Activated CD8-positive, alpha-beta T cell treated with anti-CD3 and anti-CD28 coated beads for 36 hours (primary cell): ENCODE measurements at regions of chr5 and their contacts with region 1.

Region 1: GRCh38 chr5:168579488-168580226 is 489 bp upstream of the PANK3 start:
- DNase-seq: peak; percentile 99
- ATAC-seq: peak; percentile 97
- H3K4me3 Mint-ChIP-seq: peak overlapping the region; percentile 98
- H3K27ac Mint-ChIP-seq: peak overlapping the region; percentile 98
- H3K4me1 Mint-ChIP-seq: peaks cover 33% of the 10 kb centered on the region
- H3K27me3 Mint-ChIP-seq: peaks cover 4% of the 10 kb centered on the region
- CTCF ChIP-seq: no peak

Region 2: DNA sequence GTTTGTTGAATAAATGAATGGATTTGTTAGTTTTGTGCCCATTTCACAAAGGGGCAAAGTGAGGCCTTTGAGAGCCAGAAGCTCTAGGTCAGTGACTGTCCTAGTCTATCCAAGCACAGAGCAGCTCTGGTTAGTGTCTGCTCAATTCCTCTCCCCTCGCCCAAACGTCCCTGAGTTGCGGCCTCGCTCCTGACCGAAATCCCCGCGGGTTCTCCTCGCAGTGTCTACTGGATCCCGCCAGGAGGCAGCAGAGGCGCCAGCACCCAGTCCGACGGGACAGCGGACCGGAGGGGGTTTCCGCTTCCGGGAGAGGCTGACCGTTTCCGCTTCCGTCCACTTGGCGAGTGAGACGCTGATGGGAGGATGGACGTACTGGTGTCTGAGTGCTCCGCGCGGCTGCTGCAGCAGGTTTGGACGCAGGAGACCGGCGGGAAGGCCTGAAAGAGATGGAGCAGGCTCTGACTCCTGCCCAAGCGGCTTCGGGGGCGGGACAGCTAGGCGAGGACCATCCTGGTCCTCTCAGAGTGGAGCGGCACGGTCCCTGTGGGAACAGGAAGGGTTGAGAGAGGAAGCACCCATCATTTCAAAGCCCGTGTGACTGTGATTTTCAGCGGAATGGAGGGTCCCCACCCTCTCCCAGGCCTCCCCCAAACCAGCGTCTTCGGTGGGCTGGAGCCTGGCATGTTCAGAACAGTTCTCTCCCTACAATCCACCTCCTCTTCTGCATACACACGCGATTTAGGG is 93.3 kb before region 1 on chr5 and contains the start of gene RARS1:
- CTCF ChIA-PET with region 1: interaction called, 4 read pairs
- POLR2A ChIA-PET with region 1: interaction called, 4 read pairs
- intact Hi-C with region 1: loop called (anchors 5 kb)
- DNase-seq: peak; percentile 93
- ATAC-seq: peak; percentile 97
- H3K4me3 Mint-ChIP-seq: peak within 1 kb of the TSS; percentile 99
- H3K27ac Mint-ChIP-seq: peak within 1 kb of the TSS; percentile 98
- H3K4me1 Mint-ChIP-seq: peaks cover 34% of the 10 kb centered on the region
- H3K27me3 Mint-ChIP-seq: no peaks in the 10 kb centered on the region
- CTCF ChIP-seq: peak; percentile 98
- total RNA-seq, gene RARS1: 110 to 113 TPM

Region 3: DNA sequence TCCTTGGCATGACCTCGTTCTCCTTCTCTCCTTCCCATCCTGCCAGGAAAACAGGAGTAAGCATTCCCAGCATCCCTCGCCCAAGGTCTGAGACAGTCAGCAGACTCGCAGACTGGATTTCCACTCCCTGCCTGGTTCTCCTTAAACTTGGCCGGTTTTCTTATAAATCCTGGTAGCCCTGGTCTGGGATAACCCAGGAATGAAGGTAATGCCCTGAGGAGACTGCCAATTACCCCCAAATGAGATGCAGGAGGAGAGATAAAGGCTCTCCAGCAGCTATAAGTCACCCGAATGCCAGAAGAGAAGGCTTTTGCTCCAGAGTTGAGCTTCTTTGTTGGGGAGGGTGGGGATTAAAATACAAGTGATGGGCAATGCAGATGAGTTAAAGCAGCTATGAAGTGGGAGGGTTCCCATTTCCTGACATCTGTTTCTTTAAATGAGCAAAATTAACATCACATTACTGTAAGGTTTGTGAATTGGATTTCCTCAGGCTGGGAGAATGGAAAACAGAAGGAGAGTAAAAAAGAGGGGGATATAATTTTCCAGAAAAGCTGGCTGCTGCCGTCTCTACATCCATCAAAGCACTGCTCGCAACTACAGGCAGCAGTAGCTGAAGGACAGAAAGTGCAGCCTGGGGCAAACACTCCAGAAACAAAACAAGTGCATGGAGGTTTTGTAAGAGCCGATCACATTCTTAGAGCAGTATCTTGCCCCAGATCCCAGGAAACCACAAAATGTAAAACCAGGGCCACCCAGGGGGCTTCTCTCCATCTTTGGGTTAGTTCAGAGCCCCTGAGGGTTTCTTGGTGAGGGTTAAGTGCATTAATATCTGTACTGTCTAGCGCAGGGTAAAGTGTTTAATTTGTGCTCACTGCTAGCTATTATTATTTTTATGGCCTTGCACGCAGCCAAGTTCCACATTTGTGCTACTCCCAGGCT is 177.1 kb after region 1 on chr5:
- CTCF ChIA-PET with region 1: no interaction called
- POLR2A ChIA-PET with region 1: no interaction called
- intact Hi-C with region 1: no loop called
- DNase-seq: no peak
- ATAC-seq: no peak
- H3K4me3 Mint-ChIP-seq: no peak overlapping the region
- H3K27ac Mint-ChIP-seq: no peak overlapping the region
- H3K4me1 Mint-ChIP-seq: no peaks in the 10 kb centered on the region
- H3K27me3 Mint-ChIP-seq: no peaks in the 10 kb centered on the region
- CTCF ChIP-seq: no peak